ENCODE measurements at regions of chr22 and their contacts with region 1.

Region 1: GRCh38 chr22:25702040-25702439 is 39.9 kb upstream of the MYO18B start:
- DNase-seq: peak in 1 of 9 experiments; percentile 21
- ATAC-seq: no peak
- H3K4me3 ChIP-seq: no peak overlapping the region
- H3K4me3 Mint-ChIP-seq: no peak overlapping the region
- H3K27ac ChIP-seq: no peak overlapping the region
- H3K27ac Mint-ChIP-seq: no peak overlapping the region
- H3K4me1 ChIP-seq: no peaks in the 10 kb centered on the region
- H3K4me1 Mint-ChIP-seq: no peaks in the 10 kb centered on the region
- H3K27me3 ChIP-seq: no peaks in the 10 kb centered on the region
- H3K27me3 Mint-ChIP-seq: no peaks in the 10 kb centered on the region
- CTCF ChIP-seq: no peak

Region 2: GRCh38 chr22:25465949-25466348 is 236.1 kb before region 1 on chr22:
- CTCF ChIA-PET with region 1: interaction called, 5 read pairs
- POLR2A ChIA-PET with region 1: no interaction called
- intact Hi-C with region 1: loop called (anchors 1 to 5 kb)
- DNase-seq: no peak
- ATAC-seq: no peak
- H3K4me3 ChIP-seq: no peak overlapping the region
- H3K4me3 Mint-ChIP-seq: no peak overlapping the region
- H3K27ac ChIP-seq: no peak overlapping the region
- H3K27ac Mint-ChIP-seq: no peak overlapping the region
- H3K4me1 ChIP-seq: no peaks in the 10 kb centered on the region
- H3K4me1 Mint-ChIP-seq: peaks cover 2% of the 10 kb centered on the region
- H3K27me3 ChIP-seq: no peaks in the 10 kb centered on the region
- H3K27me3 Mint-ChIP-seq: no peaks in the 10 kb centered on the region
- CTCF ChIP-seq: no peak

Region 3: GRCh38 chr22:25546751-25547150 is 155.3 kb before region 1 on chr22:
- CTCF ChIA-PET with region 1: interaction called, 4 read pairs
- POLR2A ChIA-PET with region 1: no interaction called
- intact Hi-C with region 1: loop called in 1 of 2 experiments (anchors 10 kb)
- DNase-seq: peak in 1 of 9 experiments; percentile 12
- ATAC-seq: no peak
- H3K4me3 ChIP-seq: no peak overlapping the region
- H3K4me3 Mint-ChIP-seq: no peak overlapping the region
- H3K27ac ChIP-seq: no peak overlapping the region
- H3K27ac Mint-ChIP-seq: no peak overlapping the region
- H3K4me1 ChIP-seq: no peaks in the 10 kb centered on the region
- H3K4me1 Mint-ChIP-seq: no peaks in the 10 kb centered on the region
- H3K27me3 ChIP-seq: no peaks in the 10 kb centered on the region
- H3K27me3 Mint-ChIP-seq: peaks cover under 1% of the 10 kb centered on the region
- CTCF ChIP-seq: no peak

Region 4: GRCh38 chr22:25656724-25657123 is 45.3 kb before region 1 on chr22:
- CTCF ChIA-PET with region 1: no interaction called
- POLR2A ChIA-PET with region 1: no interaction called
- intact Hi-C with region 1: no loop called
- DNase-seq: no peak
- ATAC-seq: no peak
- H3K4me3 ChIP-seq: no peak overlapping the region
- H3K4me3 Mint-ChIP-seq: no peak overlapping the region
- H3K27ac ChIP-seq: no peak overlapping the region
- H3K27ac Mint-ChIP-seq: no peak overlapping the region
- H3K4me1 ChIP-seq: no peaks in the 10 kb centered on the region
- H3K4me1 Mint-ChIP-seq: no peaks in the 10 kb centered on the region
- H3K27me3 ChIP-seq: no peaks in the 10 kb centered on the region
- H3K27me3 Mint-ChIP-seq: no peaks in the 10 kb centered on the region
- CTCF ChIP-seq: no peak

Region 5: DNA sequence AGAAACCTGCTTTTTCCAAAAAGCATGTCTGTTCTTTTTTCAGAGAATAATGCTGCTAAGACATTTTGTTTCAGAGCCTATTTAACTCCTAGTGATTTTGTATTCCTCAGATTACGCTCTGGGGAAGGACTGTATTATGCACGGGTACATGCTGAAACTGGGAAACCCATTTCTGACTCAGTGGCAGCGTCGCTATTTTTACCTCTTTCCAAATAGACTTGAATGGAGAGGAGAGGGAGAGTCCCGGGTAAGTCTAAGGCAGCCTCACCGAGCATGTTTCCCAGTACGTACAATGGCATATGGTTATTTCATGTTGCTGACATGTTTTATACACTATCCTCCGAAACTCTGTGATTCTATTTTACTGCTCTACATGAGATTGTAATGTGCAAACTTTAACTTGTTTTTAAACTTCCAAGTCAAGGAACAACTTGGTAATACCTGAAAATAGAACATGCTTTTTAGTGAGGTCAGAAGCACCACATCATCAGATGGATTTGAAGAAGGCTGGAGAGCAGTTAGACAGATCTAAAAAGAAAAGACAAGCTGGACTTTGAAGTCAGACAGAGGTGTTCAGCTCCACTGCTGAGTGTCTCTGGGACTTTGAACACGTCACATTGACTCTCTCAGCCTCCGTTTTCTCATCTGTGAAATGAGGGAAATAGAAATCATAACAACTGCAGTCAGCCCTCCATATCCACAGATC is 16.2 kb after region 1 on chr22:
- CTCF ChIA-PET with region 1: no interaction called
- POLR2A ChIA-PET with region 1: no interaction called
- intact Hi-C with region 1: no loop called
- DNase-seq: peak in 1 of 9 experiments; percentile 11
- ATAC-seq: no peak
- H3K4me3 ChIP-seq: no peak overlapping the region
- H3K4me3 Mint-ChIP-seq: no peak overlapping the region
- H3K27ac ChIP-seq: no peak overlapping the region
- H3K27ac Mint-ChIP-seq: no peak overlapping the region
- H3K4me1 ChIP-seq: no peaks in the 10 kb centered on the region
- H3K4me1 Mint-ChIP-seq: no peaks in the 10 kb centered on the region
- H3K27me3 ChIP-seq: no peaks in the 10 kb centered on the region
- H3K27me3 Mint-ChIP-seq: no peaks in the 10 kb centered on the region
- CTCF ChIP-seq: no peak